IMR-90 (cell line): ENCODE measurements at regions of chr2 and their contacts with region 1.

Region 1: DNA sequence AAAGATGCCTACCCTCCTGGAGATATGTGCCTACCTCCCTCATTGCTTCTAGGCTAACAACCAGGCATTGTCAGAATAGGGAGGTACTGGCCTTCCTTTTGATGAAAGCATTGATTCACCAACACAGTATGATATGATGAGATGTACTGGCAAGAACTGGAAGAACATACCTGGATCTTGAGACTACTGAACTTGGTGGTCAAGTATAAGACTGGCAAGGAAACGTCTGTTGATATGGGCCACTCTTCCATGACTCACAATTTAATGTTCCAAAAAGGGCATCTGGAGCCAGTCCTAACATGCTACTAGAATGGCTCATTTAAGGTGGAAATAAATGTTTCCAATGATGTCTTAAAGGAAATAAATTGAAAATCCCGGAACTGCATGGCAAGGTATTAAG is 18.1 kb downstream of the DTNB start:
- DNase-seq: no peak
- ATAC-seq: no peak
- H3K4me3 ChIP-seq: no peak overlapping the region
- H3K27ac ChIP-seq: no peak overlapping the region
- H3K4me1 ChIP-seq: no peaks in the 10 kb centered on the region; the same call in 1 of the 2 replicates
- H3K27me3 ChIP-seq: no peaks in the 10 kb centered on the region; the same call in 1 of the 2 replicates
- CTCF ChIP-seq: no peak
- POLR2A ChIP-seq: no peak
- RAD21 ChIP-seq: no peak

Region 2: DNA sequence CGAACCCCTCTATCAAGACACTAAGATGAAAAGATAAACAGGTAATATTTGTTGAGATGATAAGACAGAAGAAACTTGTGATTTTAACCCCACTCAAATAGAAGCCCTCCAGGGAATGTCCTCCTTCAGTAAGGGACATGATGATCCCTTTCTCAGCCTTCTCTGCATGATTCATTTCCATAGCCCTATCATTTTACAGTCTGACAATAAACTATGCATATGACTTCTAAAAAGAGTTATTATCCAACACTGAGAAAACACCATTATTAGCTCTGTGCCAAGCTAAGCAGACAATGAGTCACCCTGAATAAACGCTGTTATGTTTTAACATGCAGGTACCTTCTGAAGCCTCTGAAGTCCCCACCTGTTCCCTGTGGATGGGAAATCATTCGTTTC is 36.7 kb before region 1 on chr2:
- CTCF ChIA-PET with region 1: interaction called, 5 read pairs
- POLR2A ChIA-PET with region 1: no interaction called
- dilution Hi-C with region 1: no loop called
- in situ Hi-C with region 1: loop called (anchors 5 kb)
- intact Hi-C with region 1: no loop called
- DNase-seq: peak; percentile 78
- ATAC-seq: peak; percentile 58
- H3K4me3 ChIP-seq: no peak overlapping the region
- H3K27ac ChIP-seq: no peak overlapping the region
- H3K4me1 ChIP-seq: peaks cover 4% of the 10 kb centered on the region
- H3K27me3 ChIP-seq: no peaks in the 10 kb centered on the region
- CTCF ChIP-seq: no peak
- POLR2A ChIP-seq: no peak
- RAD21 ChIP-seq: no peak